Panc1 (cell line): ENCODE measurements at regions of chr12 and their contacts with region 1.

Region 1: GRCh38 chr12:26539131-26539530 is 293.9 kb downstream of the ITPR2 start:
- DNase-seq: no peak
- ATAC-seq: no peak
- H3K4me3 ChIP-seq: no peak overlapping the region
- H3K27ac ChIP-seq: no peak overlapping the region
- H3K4me1 ChIP-seq: no peaks in the 10 kb centered on the region
- H3K27me3 ChIP-seq: no peaks in the 10 kb centered on the region
- CTCF ChIP-seq: no peak

Region 2: DNA sequence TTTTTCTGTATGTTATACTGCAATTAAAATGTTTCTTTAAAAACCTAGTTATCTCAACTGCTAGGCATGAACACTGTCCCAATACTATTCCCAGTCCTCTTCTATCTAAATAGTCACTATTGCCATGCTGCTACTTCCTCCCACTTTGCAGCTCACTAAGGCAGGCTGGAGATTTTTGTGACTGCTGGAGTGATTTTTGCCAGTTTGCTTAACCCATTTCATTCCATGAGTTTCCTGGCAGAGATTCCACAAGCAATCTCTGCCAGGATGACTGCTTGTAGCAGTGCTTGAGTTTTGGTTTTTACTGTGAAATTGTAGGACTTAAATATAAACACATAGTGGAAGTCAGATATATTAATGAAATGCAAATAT is 495.1 kb before region 1 on chr12:
- CTCF ChIA-PET with region 1: no interaction called
- POLR2A ChIA-PET with region 1: no interaction called
- in situ Hi-C with region 1: no loop called
- intact Hi-C with region 1: no loop called
- DNase-seq: no peak
- ATAC-seq: peak; percentile 49
- H3K4me3 ChIP-seq: peak overlapping the region in 1 of 2 experiments; percentile 10; a peak in 1 of 4 replicates
- H3K27ac ChIP-seq: peak overlapping the region; percentile 82
- H3K4me1 ChIP-seq: peaks cover 59% of the 10 kb centered on the region
- H3K27me3 ChIP-seq: no peaks in the 10 kb centered on the region
- CTCF ChIP-seq: no peak

Region 3: DNA sequence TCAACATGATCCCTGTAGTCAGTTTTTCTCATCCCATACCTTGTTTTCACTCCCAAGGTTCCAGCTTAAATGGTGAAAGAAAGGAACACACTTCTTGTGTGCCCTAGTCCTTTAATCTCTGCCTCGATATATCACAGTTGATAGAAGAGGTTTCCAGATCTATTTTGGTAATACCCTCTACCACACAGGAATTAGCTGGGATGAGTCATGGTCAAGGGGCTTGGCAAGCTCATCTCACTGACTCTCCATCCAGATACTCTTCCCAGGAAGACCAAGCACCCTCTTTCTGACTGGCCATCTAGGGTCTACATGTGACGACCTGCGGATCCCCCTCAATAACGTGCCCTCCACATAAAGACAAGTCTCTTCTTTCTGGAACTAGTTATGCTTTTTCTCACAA is 16.0 kb after region 1 on chr12:
- CTCF ChIA-PET with region 1: no interaction called
- POLR2A ChIA-PET with region 1: interaction called, 10 read pairs
- in situ Hi-C with region 1: no loop called
- intact Hi-C with region 1: no loop called
- DNase-seq: no peak
- ATAC-seq: no peak
- H3K4me3 ChIP-seq: no peak overlapping the region
- H3K27ac ChIP-seq: no peak overlapping the region
- H3K4me1 ChIP-seq: no peaks in the 10 kb centered on the region
- H3K27me3 ChIP-seq: no peaks in the 10 kb centered on the region
- CTCF ChIP-seq: no peak